ENCODE measurements at regions of chr19 and their contacts with region 1.

Region 1: DNA sequence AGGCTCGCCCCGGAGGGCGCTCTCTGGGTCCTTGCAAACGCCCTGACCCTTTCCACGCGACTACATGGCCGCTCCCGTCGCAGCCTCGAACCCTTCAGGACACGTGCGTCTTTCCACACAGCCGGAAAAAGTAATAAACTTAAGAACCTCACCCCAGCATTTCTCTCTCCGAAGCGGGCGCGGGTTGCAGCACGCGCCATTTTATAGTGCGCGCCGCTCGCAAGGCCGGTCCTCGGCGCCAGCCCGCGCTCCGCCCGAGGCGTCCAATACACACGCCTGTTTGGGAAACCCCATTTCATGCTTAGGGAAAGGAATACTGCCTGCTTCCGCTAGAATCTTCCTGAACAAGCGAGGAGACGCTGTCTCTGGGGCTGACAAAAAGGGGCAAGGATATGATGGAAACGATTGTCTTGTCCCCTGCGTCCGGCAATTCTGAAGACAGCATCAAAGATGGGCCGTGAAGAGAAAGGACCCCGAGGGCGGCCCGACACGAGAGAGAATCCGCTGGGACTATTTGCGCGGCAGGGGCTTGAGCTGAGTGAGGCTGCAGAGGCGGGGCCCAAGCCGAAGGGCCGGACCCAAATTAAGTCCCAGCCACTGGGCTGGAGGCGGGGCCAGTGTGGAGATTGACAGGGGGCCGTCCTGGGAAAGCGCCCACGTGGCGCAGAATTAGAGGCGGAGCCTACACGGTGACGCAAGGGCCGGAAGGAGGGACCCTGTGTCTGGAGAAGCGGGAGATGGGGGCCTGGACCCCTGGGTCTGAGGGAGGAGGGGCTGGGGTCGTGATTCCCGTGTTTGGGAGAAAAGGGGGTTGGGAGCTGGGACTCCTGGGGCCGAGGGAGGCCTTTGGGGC is 14.4 kb downstream of the ACP4 start:
- H3K4me3 Mint-ChIP-seq: peak overlapping the region; percentile 100
- H3K27ac Mint-ChIP-seq: peak overlapping the region; percentile 100
- H3K4me1 Mint-ChIP-seq: peaks cover 24% of the 10 kb centered on the region
- H3K27me3 Mint-ChIP-seq: no peaks in the 10 kb centered on the region

Region 2: DNA sequence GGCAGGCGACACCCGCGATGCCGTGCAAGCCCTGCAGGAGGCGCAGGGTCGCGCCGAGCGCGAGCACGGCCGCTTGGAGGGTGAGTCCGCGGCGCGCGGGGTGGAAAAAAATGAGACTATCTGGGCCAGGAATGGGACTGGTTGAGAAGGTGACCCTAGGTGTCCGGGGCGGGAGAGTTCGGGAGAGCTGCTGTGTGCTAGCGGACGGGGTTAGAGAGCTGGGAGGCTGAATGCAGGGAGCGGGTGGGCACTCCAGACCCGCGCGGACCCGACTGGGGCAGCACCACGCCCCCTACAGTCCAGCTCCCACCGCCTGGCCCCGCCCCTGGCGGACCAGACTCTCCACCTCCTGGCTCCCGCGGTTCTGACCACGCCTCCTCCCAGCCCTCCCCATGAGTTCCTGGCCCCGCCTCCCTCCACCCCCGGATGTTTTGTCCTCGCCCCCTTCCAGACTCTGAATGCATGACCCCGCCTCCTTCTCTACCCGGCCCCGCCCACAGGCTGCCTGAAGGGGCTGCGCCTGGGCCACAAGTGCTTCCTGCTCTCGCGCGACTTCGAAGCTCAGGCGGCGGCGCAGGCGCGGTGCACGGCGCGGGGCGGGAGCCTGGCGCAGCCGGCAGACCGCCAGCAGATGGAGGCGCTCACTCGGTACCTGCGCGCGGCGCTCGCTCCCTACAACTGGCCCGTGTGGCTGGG is 80.0 kb before region 1 on chr19:
- intact Hi-C with region 1: loop called (anchors 10 kb)
- H3K4me3 Mint-ChIP-seq: peak overlapping the region; percentile 87
- H3K27ac Mint-ChIP-seq: peak overlapping the region; percentile 74
- H3K4me1 Mint-ChIP-seq: peaks cover 54% of the 10 kb centered on the region
- H3K27me3 Mint-ChIP-seq: peaks cover 82% of the 10 kb centered on the region